ENCODE measurements at regions of chr6 and their contacts with region 1.

Region 1: DNA sequence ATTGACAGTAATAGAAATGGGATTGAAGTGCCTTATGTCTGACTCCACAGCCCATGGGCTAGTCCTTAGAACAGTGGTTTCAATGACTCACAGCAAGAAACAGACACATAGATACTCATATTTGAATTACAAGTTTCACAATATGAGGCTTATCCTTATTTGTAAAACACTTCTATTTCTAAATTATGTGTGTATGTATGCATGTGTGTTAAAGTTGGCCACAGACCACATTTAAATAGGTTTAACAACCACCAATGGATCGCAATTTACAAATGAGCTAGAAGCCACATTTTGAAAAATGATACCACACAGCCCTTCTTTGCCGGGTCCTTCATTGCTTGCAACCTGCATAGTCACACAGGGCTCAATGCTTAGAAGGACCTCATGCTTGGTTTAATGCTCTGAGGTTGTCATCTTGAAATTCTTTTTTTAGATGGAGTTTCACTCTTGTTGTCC is 157.8 kb upstream of the PREP start:
- DNase-seq: no peak
- H3K4me3 Mint-ChIP-seq: no peak overlapping the region
- H3K27ac Mint-ChIP-seq: peak overlapping the region; percentile 33
- H3K4me1 Mint-ChIP-seq: peaks cover 20% of the 10 kb centered on the region
- H3K27me3 Mint-ChIP-seq: peaks cover 6% of the 10 kb centered on the region

Region 2: DNA sequence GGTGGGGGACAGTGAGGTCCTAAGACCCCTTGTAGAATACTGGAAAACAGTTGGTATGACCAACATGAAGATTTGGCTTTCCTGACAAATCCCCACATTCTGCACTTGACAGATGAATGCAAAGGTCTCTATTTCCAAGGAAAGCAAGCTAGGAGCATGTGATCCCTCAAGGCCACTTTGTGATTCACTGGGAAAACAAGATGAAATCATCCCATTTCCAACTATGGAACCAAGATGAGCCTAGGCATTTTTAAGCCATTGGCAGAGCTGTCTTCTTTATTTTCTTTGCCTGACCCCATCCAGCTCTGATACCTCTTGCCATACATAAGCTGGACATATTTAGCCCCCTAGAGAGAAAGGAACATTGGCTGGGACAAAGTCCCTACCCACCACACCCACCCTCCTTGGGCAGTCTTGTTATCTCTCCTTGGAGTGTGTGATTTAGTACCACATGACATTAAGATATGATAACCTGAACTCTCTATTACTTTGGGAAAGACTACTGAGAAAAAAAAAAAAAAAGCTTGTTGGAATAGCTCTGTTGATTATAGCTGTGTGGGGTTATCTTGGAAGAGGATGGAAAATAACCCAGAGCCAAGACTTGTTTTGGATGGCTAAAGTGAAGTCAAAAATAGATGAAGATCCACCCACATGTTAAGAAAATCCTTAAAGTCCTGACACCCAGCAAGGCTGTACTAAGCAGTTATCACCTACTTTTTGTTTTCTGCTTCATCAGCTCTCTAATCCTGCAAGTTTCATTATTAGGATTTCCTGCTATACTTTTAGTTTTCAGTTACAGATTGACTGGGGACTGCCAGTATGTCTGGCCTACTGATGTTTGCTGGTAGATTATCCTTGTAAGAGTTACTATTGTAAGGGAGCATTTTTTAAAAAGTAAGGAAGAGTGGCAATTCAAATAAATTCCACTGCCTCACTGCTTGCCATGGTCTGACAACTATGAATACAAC is 67.6 kb before region 1 on chr6:
- intact Hi-C with region 1: loop called (anchors 5 kb)
- DNase-seq: no peak
- H3K4me3 Mint-ChIP-seq: no peak overlapping the region
- H3K27ac Mint-ChIP-seq: peak overlapping the region; percentile 38
- H3K4me1 Mint-ChIP-seq: peaks cover 30% of the 10 kb centered on the region
- H3K27me3 Mint-ChIP-seq: no peaks in the 10 kb centered on the region

Region 3: DNA sequence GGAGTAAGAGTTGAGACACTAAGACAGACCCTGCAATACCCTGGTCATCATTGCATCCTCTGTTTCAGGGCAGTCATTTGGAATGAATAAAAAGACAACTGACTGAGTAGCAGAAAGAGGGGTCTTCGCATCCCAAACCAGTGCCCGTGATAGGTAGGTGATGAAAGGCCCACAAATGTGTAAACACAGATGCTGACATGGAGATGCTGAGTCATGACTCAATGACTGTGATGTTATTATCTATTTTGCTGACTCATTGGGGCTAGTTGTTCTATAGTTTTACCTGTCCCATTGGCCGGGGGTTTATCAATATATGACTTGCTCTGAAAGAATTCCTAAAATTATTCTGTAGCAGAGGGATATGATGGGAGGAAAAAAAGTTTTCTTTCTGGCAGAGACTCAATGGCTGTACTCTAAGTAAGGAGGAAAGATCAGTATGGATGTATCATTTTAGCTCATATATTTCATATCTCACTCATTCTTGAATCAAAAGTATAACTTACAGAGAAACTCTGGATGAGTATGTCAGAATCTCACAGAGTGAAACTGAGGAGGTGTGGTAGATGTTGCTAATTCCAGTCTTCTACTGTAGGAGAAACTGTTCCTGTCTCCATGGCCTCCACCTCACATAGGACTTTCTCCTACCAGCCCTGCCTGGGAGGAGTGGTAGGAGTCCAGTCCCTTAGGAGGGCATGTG is 37.9 kb before region 1 on chr6:
- intact Hi-C with region 1: loop called (anchors 5 kb)
- DNase-seq: no peak
- H3K4me3 Mint-ChIP-seq: no peak overlapping the region
- H3K27ac Mint-ChIP-seq: no peak overlapping the region
- H3K4me1 Mint-ChIP-seq: peaks cover 9% of the 10 kb centered on the region
- H3K27me3 Mint-ChIP-seq: peaks cover 7% of the 10 kb centered on the region

Region 4: DNA sequence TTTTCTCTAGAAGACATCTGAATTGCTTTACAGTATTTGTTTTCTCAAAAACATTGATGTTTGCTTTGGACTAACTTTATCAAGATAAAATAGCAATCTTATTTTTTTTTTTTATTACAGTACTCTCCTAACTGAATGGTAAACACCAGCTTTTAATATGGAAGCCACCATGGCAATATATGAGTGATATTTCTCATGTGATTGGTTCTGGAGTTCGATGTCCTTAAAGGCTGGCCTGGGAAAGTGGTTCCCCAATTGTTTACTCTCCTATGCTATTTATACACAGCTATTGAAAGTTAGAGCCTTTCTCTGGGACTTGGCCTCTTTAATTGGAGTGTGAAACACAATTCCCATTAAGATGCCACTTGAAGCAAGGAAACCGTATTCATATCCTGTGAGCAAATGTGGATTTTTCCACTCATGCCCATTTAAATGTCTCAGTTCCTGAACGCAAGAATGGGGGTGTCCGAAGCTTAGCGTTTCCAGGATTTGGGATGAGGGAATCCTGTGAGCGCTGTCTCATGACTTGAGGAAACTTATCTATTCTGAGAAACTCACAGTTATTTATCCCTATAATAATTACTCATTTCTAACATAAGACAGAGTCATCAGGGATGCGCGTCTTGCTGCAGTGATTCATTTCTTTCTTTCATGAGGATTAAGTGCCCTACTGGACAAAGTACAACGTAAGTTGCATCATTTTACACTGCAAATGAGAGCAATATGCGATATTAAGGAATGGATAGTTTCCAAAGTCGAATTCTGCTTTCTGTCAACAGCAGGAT is 14.5 kb before region 1 on chr6:
- intact Hi-C with region 1: no loop called
- DNase-seq: no peak
- H3K4me3 Mint-ChIP-seq: no peak overlapping the region
- H3K27ac Mint-ChIP-seq: no peak overlapping the region
- H3K4me1 Mint-ChIP-seq: no peaks in the 10 kb centered on the region
- H3K27me3 Mint-ChIP-seq: peaks cover 39% of the 10 kb centered on the region

Region 5: GRCh38 chr6:105573138-105573537 is 12.5 kb after region 1 on chr6:
- intact Hi-C with region 1: no loop called
- DNase-seq: no peak
- H3K4me3 Mint-ChIP-seq: no peak overlapping the region
- H3K27ac Mint-ChIP-seq: no peak overlapping the region
- H3K4me1 Mint-ChIP-seq: peaks cover 14% of the 10 kb centered on the region
- H3K27me3 Mint-ChIP-seq: peaks cover 38% of the 10 kb centered on the region

Region 6: GRCh38 chr6:105601541-105602236 is 41.0 kb after region 1 on chr6:
- intact Hi-C with region 1: loop called (anchors 5 kb)
- DNase-seq: peak; percentile 19
- H3K4me3 Mint-ChIP-seq: peak overlapping the region; percentile 34
- H3K27ac Mint-ChIP-seq: peak overlapping the region; percentile 69
- H3K4me1 Mint-ChIP-seq: peaks cover 28% of the 10 kb centered on the region
- H3K27me3 Mint-ChIP-seq: no peaks in the 10 kb centered on the region

Region 7: GRCh38 chr6:105620878-105621277 is 60.2 kb after region 1 on chr6:
- intact Hi-C with region 1: loop called (anchors 1 kb)
- DNase-seq: no peak
- H3K4me3 Mint-ChIP-seq: no peak overlapping the region
- H3K27ac Mint-ChIP-seq: peak overlapping the region; percentile 85
- H3K4me1 Mint-ChIP-seq: peaks cover 40% of the 10 kb centered on the region
- H3K27me3 Mint-ChIP-seq: peaks cover 2% of the 10 kb centered on the region